Prostate gland (tissue), 2 donors: ENCODE measurements at regions of chr1 and their contacts with region 1.

Region 1: DNA sequence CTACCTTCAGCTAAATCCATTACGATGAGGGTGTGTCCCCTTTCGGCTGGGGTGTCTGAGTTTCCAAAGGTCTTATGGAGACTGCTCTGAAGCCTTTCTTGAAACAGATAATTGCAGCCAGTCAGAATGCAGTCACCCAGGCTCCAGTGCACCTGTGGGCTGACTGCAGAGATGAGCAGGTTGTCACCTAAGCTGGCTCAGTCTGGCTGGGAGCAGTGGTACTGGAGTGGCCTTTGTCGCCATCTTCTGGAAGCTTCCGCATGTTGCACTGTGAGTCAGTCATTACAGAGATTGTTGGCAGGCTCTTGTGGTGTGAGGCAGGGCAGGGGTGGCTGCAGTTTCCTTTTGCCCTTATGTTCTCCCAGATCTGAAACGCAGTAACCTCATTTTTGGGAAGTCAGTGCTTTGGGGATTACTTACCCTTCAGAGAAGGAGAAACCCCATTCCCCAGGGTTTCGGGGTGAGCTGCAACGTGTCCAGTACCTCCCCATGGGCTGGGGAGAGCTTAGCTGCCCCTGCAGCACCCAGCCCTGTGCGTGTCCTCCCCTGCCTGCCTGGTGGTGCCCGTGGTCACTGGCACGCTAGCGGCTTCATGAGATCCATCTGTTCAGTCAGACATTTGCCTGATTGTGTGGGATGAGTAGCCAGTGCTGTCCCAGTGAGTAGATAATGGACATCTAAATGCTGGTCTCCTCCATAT is 48.0 kb downstream of the SMYD2 start:
- DNase-seq: peak; percentile 83
- H3K4me3 ChIP-seq: no peak overlapping the region
- H3K27ac ChIP-seq: peak overlapping the region in 1 of 2 donors; percentile 52
- H3K4me1 ChIP-seq: peaks cover 11% of the 10 kb centered on the region
- H3K27me3 ChIP-seq: no peaks in the 10 kb centered on the region
- CTCF ChIP-seq: peak; percentile 74 to 97 (median 94)
- POLR2A ChIP-seq: no peak

Region 2: DNA sequence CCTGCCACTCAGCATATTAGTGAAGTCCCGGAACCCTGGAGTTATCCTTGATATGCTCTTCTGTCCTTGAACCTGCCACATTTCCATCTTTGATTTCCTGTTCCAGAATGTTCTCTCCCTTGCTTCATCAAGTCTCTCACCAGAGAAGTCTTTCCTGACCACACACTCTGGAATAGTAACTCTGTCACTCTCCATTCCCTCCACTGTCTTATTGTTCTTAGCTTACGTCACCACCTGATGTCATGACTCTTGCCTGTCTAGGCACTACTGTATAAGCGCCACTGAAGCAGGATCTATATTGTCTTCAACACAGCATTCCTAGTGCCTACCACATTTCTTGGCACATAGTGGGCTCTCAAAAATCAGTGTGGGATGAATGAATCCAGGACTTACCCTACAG is 113.3 kb before region 1 on chr1:
- intact Hi-C with region 1: loop called (anchors 2 kb)
- DNase-seq: no peak
- H3K4me3 ChIP-seq: no peak overlapping the region
- H3K27ac ChIP-seq: peak overlapping the region in 1 of 2 donors; percentile 41
- H3K4me1 ChIP-seq: no peaks in the 10 kb centered on the region
- H3K27me3 ChIP-seq: no peaks in the 10 kb centered on the region
- CTCF ChIP-seq: no peak
- POLR2A ChIP-seq: no peak

Region 3: DNA sequence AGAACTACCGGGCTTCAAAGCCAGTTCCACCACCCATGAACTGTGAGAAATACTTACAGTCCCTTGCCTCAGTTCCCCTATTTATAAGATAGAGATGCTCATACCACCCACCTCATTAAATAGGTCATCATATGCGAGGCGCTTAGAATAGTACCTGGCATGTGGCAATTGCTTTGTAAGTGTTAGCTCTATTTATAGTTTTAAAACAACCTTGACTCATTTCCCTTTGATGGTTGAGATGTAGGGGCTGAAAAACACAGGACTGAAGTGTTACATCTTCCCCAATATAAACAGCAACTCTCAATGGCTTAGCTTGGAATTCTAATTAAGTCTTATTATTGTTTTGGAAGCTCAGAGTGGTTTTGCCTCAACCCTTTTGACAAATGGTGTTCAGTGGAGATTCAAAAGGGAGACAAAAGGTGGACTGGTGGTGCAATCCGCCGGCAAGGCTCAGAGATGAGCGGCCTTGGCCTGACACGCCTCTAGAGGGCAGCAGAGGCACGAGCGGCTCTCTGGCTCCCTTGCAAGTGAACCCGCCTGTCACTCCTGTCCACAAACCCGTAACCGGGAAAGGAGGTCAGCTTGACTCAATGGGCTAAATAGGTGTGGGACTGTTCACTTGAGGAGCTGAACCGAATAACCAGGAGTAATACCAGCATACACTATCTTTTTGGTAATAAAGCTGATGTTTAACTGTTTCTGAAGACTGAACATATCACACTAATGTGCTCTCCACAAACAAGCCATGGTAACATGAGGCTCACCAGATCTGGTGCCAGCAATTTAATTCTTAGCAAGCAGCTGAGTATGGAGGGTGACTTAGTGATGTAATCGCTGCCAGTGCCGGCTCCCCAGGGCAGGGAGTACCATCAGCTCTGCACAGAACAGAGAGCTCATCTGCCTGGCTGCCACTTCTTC is 67.5 kb before region 1 on chr1:
- intact Hi-C with region 1: loop called (anchors 2 kb)
- DNase-seq: peak; percentile 80
- H3K4me3 ChIP-seq: no peak overlapping the region
- H3K27ac ChIP-seq: no peak overlapping the region
- H3K4me1 ChIP-seq: no peaks in the 10 kb centered on the region
- H3K27me3 ChIP-seq: no peaks in the 10 kb centered on the region
- CTCF ChIP-seq: peak; percentile 65 to 89 (median 88)
- POLR2A ChIP-seq: no peak

Region 4: DNA sequence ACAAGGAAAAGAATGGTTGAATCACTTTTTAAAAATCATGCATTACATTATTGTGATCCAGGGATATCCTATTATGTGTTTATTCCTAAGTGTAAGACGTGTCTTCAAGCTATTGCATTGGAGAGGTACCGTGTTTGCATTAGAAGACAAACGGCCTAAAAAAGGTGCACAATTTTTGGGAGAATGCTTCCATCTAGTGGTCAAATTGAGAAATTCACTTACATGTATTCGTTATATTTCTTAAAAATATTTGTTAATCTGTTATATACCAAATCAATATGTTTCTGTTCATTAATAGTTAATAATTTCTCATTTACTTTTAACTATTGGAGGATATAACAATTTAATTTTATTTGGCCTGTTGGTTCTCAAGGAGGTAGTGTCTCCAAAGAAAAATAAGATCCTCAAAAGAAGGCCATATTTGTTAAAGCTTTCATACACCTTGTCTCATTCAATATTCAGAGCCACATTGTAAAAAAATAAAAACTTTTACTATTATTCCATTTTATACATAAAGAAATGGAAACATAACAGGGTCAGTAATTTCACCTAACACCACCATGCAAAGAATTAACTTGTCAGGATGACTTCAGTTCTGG is 1197.7 kb after region 1 on chr1:
- intact Hi-C with region 1: loop called (anchors 10 kb)
- DNase-seq: no peak
- H3K4me3 ChIP-seq: no peak overlapping the region
- H3K27ac ChIP-seq: no peak overlapping the region
- H3K4me1 ChIP-seq: no peaks in the 10 kb centered on the region
- H3K27me3 ChIP-seq: no peaks in the 10 kb centered on the region
- CTCF ChIP-seq: peak; percentile 44 to 86 (median 80)
- POLR2A ChIP-seq: no peak